MCF 10A (cell line): ENCODE measurements at regions of chr3 and their contacts with region 1.

Region 1: DNA sequence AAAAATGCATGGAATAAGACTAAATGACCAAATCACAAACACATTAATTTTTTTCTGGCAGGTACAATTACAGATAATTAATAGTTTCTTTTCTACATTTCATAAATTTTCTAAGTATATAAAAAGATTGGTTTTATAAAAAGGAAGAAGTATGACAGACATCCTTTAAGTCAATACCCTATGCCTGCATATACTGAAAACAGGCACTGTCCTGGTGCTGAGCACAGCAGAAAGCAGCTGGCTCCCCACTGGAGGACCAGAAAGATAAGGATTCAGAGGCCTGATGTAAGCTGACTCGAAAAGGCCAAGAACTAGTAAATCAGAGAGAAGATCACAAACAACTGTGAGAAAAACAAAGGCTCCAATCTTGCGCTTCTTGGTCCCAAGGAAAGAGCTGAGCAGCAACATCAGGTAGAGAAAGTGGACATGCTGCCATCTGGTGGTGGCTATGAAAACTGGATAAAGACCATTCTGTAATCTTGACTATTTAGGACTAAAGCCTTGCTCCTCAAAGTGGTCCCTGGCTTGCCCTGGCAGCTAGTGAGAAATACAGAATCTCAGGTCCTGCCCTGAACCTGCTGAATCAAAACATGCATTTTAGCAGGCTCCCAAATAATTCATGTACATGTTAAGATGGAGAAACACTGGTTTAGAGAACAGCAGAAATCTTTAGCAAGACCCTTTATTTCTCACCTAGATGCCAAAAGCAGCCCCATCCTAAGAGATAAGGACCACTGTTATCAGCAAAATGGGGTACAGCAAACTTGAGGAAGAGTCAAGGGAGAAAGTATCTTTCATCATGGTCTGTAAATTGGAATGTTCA is 76.0 kb downstream of the TRANK1 start:
- DNase-seq: peak; percentile 73
- H3K4me3 Mint-ChIP-seq: no peak overlapping the region
- H3K27ac Mint-ChIP-seq: no peak overlapping the region
- H3K4me1 Mint-ChIP-seq: peaks cover 5% of the 10 kb centered on the region
- H3K27me3 Mint-ChIP-seq: no peaks in the 10 kb centered on the region
- CTCF ChIP-seq: peak; percentile 82

Region 2: GRCh38 chr3:36124118-36124796 is 744.6 kb before region 1 on chr3:
- CTCF ChIA-PET with region 1: no interaction called
- POLR2A ChIA-PET with region 1: no interaction called
- intact Hi-C with region 1: loop called (anchors 1 kb)
- DNase-seq: peak; percentile 74
- H3K4me3 Mint-ChIP-seq: no peak overlapping the region
- H3K27ac Mint-ChIP-seq: no peak overlapping the region
- H3K4me1 Mint-ChIP-seq: no peaks in the 10 kb centered on the region
- H3K27me3 Mint-ChIP-seq: no peaks in the 10 kb centered on the region
- CTCF ChIP-seq: peak; percentile 87

Region 3: GRCh38 chr3:36477655-36478054 is 391.2 kb before region 1 on chr3:
- CTCF ChIA-PET with region 1: no interaction called
- POLR2A ChIA-PET with region 1: no interaction called
- intact Hi-C with region 1: no loop called
- DNase-seq: peak; percentile 48
- H3K4me3 Mint-ChIP-seq: no peak overlapping the region
- H3K27ac Mint-ChIP-seq: no peak overlapping the region
- H3K4me1 Mint-ChIP-seq: no peaks in the 10 kb centered on the region
- H3K27me3 Mint-ChIP-seq: no peaks in the 10 kb centered on the region
- CTCF ChIP-seq: no peak

Region 4: GRCh38 chr3:36677331-36678007 is 191.4 kb before region 1 on chr3:
- CTCF ChIA-PET with region 1: no interaction called
- POLR2A ChIA-PET with region 1: no interaction called
- intact Hi-C with region 1: no loop called
- DNase-seq: peak; percentile 85
- H3K4me3 Mint-ChIP-seq: peak overlapping the region; percentile 26
- H3K27ac Mint-ChIP-seq: peak overlapping the region; percentile 99
- H3K4me1 Mint-ChIP-seq: peaks cover 34% of the 10 kb centered on the region
- H3K27me3 Mint-ChIP-seq: no peaks in the 10 kb centered on the region
- CTCF ChIP-seq: peak; percentile 20

Region 5: DNA sequence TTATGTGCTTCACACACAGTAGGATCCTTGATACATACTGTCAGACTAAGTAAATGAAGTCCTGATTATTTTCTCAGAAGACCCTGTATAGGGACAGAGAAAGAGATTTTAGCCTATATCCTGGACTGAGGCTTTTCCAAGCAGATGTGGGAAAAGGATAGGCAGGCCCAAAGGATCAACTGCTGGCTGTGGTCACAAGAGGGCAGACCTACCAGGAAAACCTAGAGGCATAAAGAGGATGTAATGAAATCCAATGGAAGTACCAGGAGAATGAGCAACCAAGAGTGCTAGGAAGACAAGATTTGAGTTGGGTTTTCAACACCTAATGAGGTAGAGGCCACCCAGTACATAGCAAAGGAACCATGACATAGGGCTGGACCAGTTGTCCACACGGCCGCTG is 127.5 kb before region 1 on chr3:
- CTCF ChIA-PET with region 1: interaction called, 45 read pairs
- POLR2A ChIA-PET with region 1: no interaction called
- intact Hi-C with region 1: no loop called
- DNase-seq: peak; percentile 11
- H3K4me3 Mint-ChIP-seq: no peak overlapping the region
- H3K27ac Mint-ChIP-seq: no peak overlapping the region
- H3K4me1 Mint-ChIP-seq: no peaks in the 10 kb centered on the region
- H3K27me3 Mint-ChIP-seq: peaks cover 35% of the 10 kb centered on the region
- CTCF ChIP-seq: no peak

Region 6: GRCh38 chr3:36792342-36792741 is 76.5 kb before region 1 on chr3:
- CTCF ChIA-PET with region 1: interaction called, 69 read pairs
- POLR2A ChIA-PET with region 1: no interaction called
- intact Hi-C with region 1: loop called (anchors 1 kb)
- DNase-seq: peak; percentile 51
- H3K4me3 Mint-ChIP-seq: no peak overlapping the region
- H3K27ac Mint-ChIP-seq: no peak overlapping the region
- H3K4me1 Mint-ChIP-seq: no peaks in the 10 kb centered on the region
- H3K27me3 Mint-ChIP-seq: peaks cover 26% of the 10 kb centered on the region
- CTCF ChIP-seq: peak; percentile 53

Region 7: GRCh38 chr3:36852071-36852470 is 16.8 kb before region 1 on chr3:
- CTCF ChIA-PET with region 1: interaction called, 47 read pairs
- POLR2A ChIA-PET with region 1: no interaction called
- intact Hi-C with region 1: no loop called
- DNase-seq: no peak
- H3K4me3 Mint-ChIP-seq: no peak overlapping the region
- H3K27ac Mint-ChIP-seq: no peak overlapping the region
- H3K4me1 Mint-ChIP-seq: no peaks in the 10 kb centered on the region
- H3K27me3 Mint-ChIP-seq: no peaks in the 10 kb centered on the region
- CTCF ChIP-seq: no peak

Region 8: DNA sequence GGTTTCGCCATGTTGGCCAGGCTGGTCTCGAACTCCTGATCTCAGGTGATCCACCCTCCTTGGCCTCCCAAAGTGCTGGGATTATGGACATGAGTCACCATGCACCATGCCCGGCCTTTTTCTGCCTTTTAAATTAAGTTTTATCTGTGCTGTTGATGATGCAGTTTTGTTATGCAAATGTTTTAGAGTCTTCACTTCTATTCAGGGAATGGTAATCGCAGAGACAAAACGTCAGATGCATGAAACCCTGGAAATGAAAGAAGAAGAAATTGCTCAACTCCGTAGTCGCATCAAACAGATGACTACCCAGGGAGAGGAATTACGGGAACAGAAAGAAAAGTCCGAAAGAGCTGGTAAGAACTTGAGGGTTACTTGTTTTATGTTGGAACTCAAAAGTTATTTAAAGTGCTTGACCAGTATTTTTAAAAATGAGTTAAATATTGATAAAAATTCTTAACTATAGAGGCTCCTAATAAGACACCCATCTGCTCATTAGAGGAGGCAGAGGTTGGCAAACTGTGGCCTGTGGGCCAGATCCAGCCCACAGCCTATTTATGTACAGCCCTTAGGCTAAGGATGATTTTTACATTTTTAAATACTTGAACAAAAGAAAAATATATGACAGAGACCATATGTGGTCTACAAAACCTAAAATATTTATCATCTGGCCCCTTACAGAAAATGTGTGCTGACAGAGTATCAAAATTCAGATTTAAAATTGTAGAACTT is 433.3 kb after region 1 on chr3:
- CTCF ChIA-PET with region 1: no interaction called
- POLR2A ChIA-PET with region 1: no interaction called
- intact Hi-C with region 1: no loop called
- DNase-seq: no peak
- H3K4me3 Mint-ChIP-seq: no peak overlapping the region
- H3K27ac Mint-ChIP-seq: no peak overlapping the region
- H3K4me1 Mint-ChIP-seq: no peaks in the 10 kb centered on the region
- H3K27me3 Mint-ChIP-seq: no peaks in the 10 kb centered on the region
- CTCF ChIP-seq: no peak